ENCODE measurements at regions of chr5 and their contacts with region 1.

Region 1: DNA sequence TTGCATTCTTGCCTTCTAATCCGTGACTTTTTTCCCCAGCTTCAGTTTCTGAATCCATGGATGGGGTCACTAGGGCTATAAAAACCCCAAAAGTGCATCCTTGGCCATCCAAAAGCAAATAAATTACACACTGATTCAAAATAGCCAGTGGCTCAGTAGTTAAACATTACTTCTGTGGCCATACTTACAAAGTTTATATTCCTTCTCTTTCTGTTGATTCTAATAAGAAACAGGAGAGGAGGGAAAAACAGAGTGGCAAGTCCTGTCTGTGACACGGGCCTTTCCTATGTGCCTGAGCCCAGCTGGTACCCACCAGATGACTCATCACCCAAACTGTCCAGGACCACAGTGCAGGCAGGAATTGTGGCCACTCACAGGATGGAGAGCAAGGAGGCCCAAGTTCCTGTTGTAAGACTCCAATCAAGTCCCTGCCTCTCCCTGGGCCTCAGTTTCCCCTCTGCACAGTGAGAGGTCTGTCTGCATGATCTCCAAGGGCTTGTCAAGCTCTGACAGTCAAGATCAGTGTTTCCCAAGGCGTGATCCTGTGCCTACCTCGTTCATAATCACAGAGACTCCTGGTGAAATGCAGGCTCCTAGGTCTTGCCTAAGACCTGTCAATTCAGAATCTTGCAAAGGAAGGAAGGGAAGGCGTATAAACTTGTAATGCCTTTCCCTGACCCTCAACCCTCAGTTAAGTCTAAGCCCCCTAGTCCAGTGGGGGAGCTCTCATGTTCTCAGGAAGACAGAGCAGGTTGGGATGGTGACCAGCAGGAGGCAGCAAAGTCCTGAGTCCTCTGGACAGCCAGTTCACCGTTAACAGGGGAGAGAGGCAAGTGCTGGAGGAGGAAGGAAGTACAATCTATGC is 29.5 kb downstream of the TNIP1 start:
- DNase-seq: peak; percentile 39 to 68 (median 63)
- ATAC-seq: peak; percentile 85
- H3K4me3 ChIP-seq: no peak overlapping the region
- H3K4me3 Mint-ChIP-seq: no peak overlapping the region
- H3K27ac ChIP-seq: no peak overlapping the region
- H3K27ac Mint-ChIP-seq: peak overlapping the region in 7 of 9 donors; percentile 29 to 63 (median 44)
- H3K4me1 ChIP-seq: no peaks in the 10 kb centered on the region
- H3K4me1 Mint-ChIP-seq: peaks cover 0 to 33% (median 7%) of the 10 kb centered on the region in 7 donors
- H3K27me3 ChIP-seq: no peaks in the 10 kb centered on the region
- H3K27me3 Mint-ChIP-seq: no peaks in the 10 kb centered on the region

Region 2: GRCh38 chr5:150560401-150561193 is 490.7 kb before region 1 on chr5:
- CTCF ChIA-PET with region 1: no interaction called
- POLR2A ChIA-PET with region 1: no interaction called
- intact Hi-C with region 1: loop called (anchors 5 to 10 kb)
- DNase-seq: peak; percentile 48 to 86 (median 78)
- ATAC-seq: peak; percentile 98
- H3K4me3 ChIP-seq: no peak overlapping the region
- H3K4me3 Mint-ChIP-seq: no peak overlapping the region
- H3K27ac ChIP-seq: no peak overlapping the region
- H3K27ac Mint-ChIP-seq: no peak overlapping the region
- H3K4me1 ChIP-seq: no peaks in the 10 kb centered on the region
- H3K4me1 Mint-ChIP-seq: peaks cover 0 to 3% (median 0%) of the 10 kb centered on the region in 7 donors
- H3K27me3 ChIP-seq: no peaks in the 10 kb centered on the region
- H3K27me3 Mint-ChIP-seq: peaks cover 0 to 10% (median 0%) of the 10 kb centered on the region in 5 donors

Region 3: DNA sequence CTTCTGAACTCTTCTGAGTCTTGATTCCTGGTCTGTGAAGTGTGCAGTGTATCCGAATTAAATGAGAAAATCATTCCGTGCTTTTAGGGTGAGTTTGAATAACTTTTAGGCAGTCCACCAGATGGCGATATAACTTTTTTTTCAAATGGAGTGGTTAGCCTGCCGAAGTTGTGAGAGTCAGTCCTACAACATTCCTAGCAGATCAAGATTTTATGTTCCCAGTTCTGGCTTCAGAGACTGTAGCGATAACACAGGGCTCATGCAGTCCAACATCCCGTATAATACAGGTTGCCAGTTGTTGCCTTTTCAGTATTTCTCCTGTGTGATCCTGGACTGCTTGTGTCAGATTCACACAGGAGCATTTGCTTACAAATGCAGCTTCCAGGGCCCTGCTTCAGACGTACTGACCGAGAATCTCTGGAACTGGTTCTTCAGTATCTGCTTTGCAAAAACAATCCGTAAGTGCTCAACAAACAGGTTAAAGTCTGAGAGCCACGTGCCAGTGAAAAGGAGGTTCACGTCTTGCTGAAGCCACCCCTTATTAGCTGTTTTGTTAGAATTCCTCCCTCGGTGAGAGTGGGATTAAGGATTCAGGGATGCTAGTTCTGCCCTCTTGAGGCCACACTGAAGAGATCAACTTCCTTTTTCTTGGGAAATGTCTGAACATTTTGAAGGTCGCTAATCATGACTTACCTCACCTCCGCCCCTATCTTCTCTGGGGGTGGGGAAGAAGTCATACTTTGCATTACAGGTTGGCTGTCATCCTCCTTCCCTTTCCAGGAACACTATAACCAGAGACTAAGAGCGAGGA is 250.0 kb before region 1 on chr5:
- CTCF ChIA-PET with region 1: no interaction called
- POLR2A ChIA-PET with region 1: no interaction called
- intact Hi-C with region 1: loop called in 1 of 2 experiments (anchors 1 kb)
- DNase-seq: peak in 7 of 9 donors; percentile 25 to 53 (median 43)
- ATAC-seq: peak; percentile 55
- H3K4me3 ChIP-seq: no peak overlapping the region
- H3K4me3 Mint-ChIP-seq: peak overlapping the region in 1 of 10 donors; percentile 18
- H3K27ac ChIP-seq: no peak overlapping the region
- H3K27ac Mint-ChIP-seq: no peak overlapping the region
- H3K4me1 ChIP-seq: no peaks in the 10 kb centered on the region
- H3K4me1 Mint-ChIP-seq: peaks cover 0 to 18% (median 5%) of the 10 kb centered on the region in 7 donors
- H3K27me3 ChIP-seq: no peaks in the 10 kb centered on the region
- H3K27me3 Mint-ChIP-seq: peaks cover 0 to 16% (median 5%) of the 10 kb centered on the region in 5 donors

Region 4: DNA sequence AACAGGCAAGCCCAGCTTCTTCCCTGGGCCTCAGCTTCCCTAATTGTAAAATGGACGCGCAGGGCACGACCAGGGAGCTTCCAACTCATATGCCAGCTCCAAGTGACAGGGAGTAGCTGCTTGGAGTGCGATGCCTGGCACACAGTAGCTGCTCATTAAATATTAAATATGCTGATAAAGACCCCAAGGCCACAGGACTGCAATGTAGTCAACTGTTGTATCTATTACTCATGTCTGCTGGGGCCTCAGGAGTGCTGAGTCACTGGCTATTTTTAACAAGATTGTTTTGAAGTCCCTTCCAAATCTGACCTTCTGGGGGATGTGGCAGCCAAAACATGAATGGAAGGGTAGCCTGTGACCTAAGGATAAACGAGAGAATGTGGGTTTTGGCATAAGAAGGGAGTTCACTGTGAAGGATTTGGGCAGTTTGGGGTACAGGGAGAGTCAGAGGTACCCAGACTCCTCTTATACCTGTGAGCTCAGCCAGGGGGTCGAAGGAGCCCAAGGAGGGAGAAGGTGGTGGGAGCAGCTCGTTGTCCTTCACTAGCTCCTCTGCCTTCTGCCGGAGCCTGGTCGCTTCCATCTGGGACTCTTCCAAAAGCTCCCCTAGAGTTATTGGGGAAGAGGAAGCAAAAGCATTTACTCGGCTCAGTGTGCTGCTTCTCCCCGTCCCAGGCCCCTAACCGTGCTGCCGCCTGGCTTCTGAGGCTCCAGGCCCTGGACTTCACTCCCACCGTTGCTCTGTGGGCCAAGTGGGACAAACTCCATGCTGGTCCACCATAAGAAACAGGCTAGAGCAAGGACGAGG is 12.0 kb after region 1 on chr5:
- CTCF ChIA-PET with region 1: interaction called, 23 read pairs
- POLR2A ChIA-PET with region 1: no interaction called
- intact Hi-C with region 1: no loop called
- DNase-seq: no peak
- ATAC-seq: no peak
- H3K4me3 ChIP-seq: no peak overlapping the region
- H3K4me3 Mint-ChIP-seq: no peak overlapping the region
- H3K27ac ChIP-seq: no peak overlapping the region
- H3K27ac Mint-ChIP-seq: peak overlapping the region in 3 of 9 donors; percentile 0 to 37 (median 8)
- H3K4me1 ChIP-seq: peaks cover 13 to 28% of the 10 kb centered on the region in 2 donors
- H3K4me1 Mint-ChIP-seq: peaks cover 33 to 67% (median 60%) of the 10 kb centered on the region in 7 donors
- H3K27me3 ChIP-seq: no peaks in the 10 kb centered on the region
- H3K27me3 Mint-ChIP-seq: no peaks in the 10 kb centered on the region

Region 5: GRCh38 chr5:151080623-151081430 is 29.5 kb after region 1 on chr5 and contains the start of gene TNIP1:
- CTCF ChIA-PET with region 1: interaction called, 9 read pairs
- POLR2A ChIA-PET with region 1: interaction called, 5 read pairs
- intact Hi-C with region 1: loop called in 1 of 2 experiments (anchors 2 kb)
- DNase-seq: peak; percentile 86 to 99 (median 90)
- ATAC-seq: peak; percentile 94
- H3K4me3 ChIP-seq: peak within 1 kb of the TSS; percentile 86
- H3K4me3 Mint-ChIP-seq: peak within 1 kb of the TSS; percentile 85 to 95 (median 90)
- H3K27ac ChIP-seq: peak within 1 kb of the TSS; percentile 96
- H3K27ac Mint-ChIP-seq: peak within 1 kb of the TSS; percentile 86 to 95 (median 91)
- H3K4me1 ChIP-seq: peaks cover 37 to 69% of the 10 kb centered on the region in 2 donors
- H3K4me1 Mint-ChIP-seq: peaks cover 53 to 84% (median 73%) of the 10 kb centered on the region in 7 donors
- H3K27me3 ChIP-seq: no peaks in the 10 kb centered on the region
- H3K27me3 Mint-ChIP-seq: no peaks in the 10 kb centered on the region
- total RNA-seq, gene TNIP1: 124 to 234 (median 131) TPM

Region 6: GRCh38 chr5:151094054-151094851 is 43.0 kb after region 1 on chr5:
- CTCF ChIA-PET with region 1: interaction called, 8 read pairs
- POLR2A ChIA-PET with region 1: no interaction called
- intact Hi-C with region 1: loop called in 1 of 2 experiments (anchors 5 kb)
- DNase-seq: peak in 2 of 9 donors; percentile 31 to 73
- ATAC-seq: peak; percentile 74
- H3K4me3 ChIP-seq: no peak overlapping the region
- H3K4me3 Mint-ChIP-seq: peak overlapping the region; percentile 7 to 73 (median 47)
- H3K27ac ChIP-seq: peak overlapping the region; percentile 26
- H3K27ac Mint-ChIP-seq: peak overlapping the region; percentile 38 to 90 (median 84)
- H3K4me1 ChIP-seq: peaks cover 31 to 53% of the 10 kb centered on the region in 2 donors
- H3K4me1 Mint-ChIP-seq: peaks cover 51 to 86% (median 69%) of the 10 kb centered on the region in 7 donors
- H3K27me3 ChIP-seq: no peaks in the 10 kb centered on the region
- H3K27me3 Mint-ChIP-seq: no peaks in the 10 kb centered on the region

Region 7: DNA sequence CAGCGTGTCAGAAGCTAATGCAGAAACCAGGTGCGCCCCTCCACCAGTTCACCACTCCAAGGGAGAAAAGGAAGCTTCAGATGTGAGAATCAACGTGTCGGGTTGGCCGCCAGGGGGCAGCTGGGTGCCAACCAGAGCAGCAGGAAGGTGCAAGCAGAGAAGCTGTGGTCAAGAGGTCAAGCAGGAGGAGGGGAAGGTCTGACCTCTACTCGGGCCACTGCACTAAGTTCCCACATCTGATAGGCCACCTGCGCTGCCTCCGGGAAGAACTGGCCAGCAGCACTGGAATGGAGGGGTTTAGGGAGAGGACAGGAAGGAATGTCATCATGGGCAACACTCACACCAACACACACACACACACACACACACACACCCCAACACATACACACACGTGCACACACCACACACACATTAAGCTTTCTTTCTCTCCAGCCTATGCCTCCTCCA is 74.9 kb after region 1 on chr5:
- CTCF ChIA-PET with region 1: interaction called, 12 read pairs
- POLR2A ChIA-PET with region 1: no interaction called
- intact Hi-C with region 1: no loop called
- DNase-seq: peak; percentile 41 to 71 (median 64)
- ATAC-seq: peak; percentile 73
- H3K4me3 ChIP-seq: no peak overlapping the region
- H3K4me3 Mint-ChIP-seq: peak overlapping the region in 9 of 10 donors; percentile 22 to 84 (median 54)
- H3K27ac ChIP-seq: peak overlapping the region; percentile 72
- H3K27ac Mint-ChIP-seq: peak overlapping the region; percentile 68 to 99 (median 91)
- H3K4me1 ChIP-seq: peaks cover under 1 to 27% of the 10 kb centered on the region in 2 donors
- H3K4me1 Mint-ChIP-seq: peaks cover 32 to 75% (median 57%) of the 10 kb centered on the region in 7 donors
- H3K27me3 ChIP-seq: no peaks in the 10 kb centered on the region
- H3K27me3 Mint-ChIP-seq: no peaks in the 10 kb centered on the region

Region 8: DNA sequence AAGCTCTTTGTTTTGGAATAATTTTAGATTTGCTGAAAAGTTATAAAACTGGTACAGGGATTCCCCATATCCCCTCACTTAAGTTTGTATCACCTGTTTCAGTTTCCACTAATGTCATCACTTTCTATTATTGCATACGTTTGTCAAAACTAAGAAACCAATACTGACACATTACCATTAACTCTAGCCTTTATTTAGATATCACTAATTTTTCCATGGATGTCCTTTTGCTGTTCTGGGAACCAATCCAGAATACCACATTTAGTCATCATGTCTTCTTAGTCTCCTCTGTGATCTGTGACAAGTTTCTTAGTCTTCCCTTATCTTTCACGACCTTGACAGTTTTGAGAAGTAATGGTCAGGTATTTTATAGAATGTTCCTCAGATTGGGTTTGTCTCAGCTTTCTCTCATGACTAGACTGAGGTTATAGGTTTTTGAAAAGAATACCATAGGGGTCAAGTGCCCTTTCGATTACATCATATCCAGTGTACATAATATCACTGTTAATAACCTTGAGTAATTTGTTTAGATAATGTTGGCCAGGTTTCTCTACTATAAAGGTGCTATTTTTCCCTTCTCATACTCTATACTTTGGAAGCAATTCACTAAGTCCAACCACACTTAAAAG is 1405.6 kb after region 1 on chr5:
- CTCF ChIA-PET with region 1: no interaction called
- POLR2A ChIA-PET with region 1: no interaction called
- intact Hi-C with region 1: no loop called
- DNase-seq: no peak
- ATAC-seq: no peak
- H3K4me3 ChIP-seq: no peak overlapping the region
- H3K4me3 Mint-ChIP-seq: no peak overlapping the region
- H3K27ac ChIP-seq: no peak overlapping the region
- H3K27ac Mint-ChIP-seq: no peak overlapping the region
- H3K4me1 ChIP-seq: no peaks in the 10 kb centered on the region
- H3K4me1 Mint-ChIP-seq: no peaks in the 10 kb centered on the region
- H3K27me3 ChIP-seq: no peaks in the 10 kb centered on the region
- H3K27me3 Mint-ChIP-seq: peaks cover 0 to 35% (median 21%) of the 10 kb centered on the region in 5 donors

Measured in naive thymus-derived CD4-positive, alpha-beta T cell (primary cell).